Activated T-helper 2 cell treated with anti-CD3 and anti-CD28 coated beads, Interferon-gamma antibody, Interleukin-2, Interleukin-4, amounts not matched to agents 10 μg/mL and 5 μg/mL and 100 μg/mL, durations not matched to agents 14 hours and 24 hours and 36 hours (primary cell): ENCODE measurements at regions of chr4 and their contacts with region 1.

Region 1: GRCh38 chr4:10006231-10006600 is 15.1 kb downstream of the SLC2A9 start:
- DNase-seq: no peak
- H3K4me3 Mint-ChIP-seq: no peak overlapping the region
- H3K27ac Mint-ChIP-seq: no peak overlapping the region
- H3K4me1 Mint-ChIP-seq: peaks cover 40% of the 10 kb centered on the region
- H3K27me3 Mint-ChIP-seq: no peaks in the 10 kb centered on the region

Region 2: GRCh38 chr4:9825049-9825448 is 181.2 kb before region 1 on chr4:
- intact Hi-C with region 1: no loop called
- DNase-seq: peak; percentile 11
- H3K4me3 Mint-ChIP-seq: no peak overlapping the region
- H3K27ac Mint-ChIP-seq: no peak overlapping the region
- H3K4me1 Mint-ChIP-seq: peaks cover 17% of the 10 kb centered on the region
- H3K27me3 Mint-ChIP-seq: peaks cover 48% of the 10 kb centered on the region

Region 3: GRCh38 chr4:9904976-9905587 is 101.1 kb before region 1 on chr4:
- intact Hi-C with region 1: loop called (anchors 10 kb)
- DNase-seq: no peak
- H3K4me3 Mint-ChIP-seq: no peak overlapping the region
- H3K27ac Mint-ChIP-seq: no peak overlapping the region
- H3K4me1 Mint-ChIP-seq: peaks cover 11% of the 10 kb centered on the region
- H3K27me3 Mint-ChIP-seq: peaks cover 2% of the 10 kb centered on the region

Region 4: DNA sequence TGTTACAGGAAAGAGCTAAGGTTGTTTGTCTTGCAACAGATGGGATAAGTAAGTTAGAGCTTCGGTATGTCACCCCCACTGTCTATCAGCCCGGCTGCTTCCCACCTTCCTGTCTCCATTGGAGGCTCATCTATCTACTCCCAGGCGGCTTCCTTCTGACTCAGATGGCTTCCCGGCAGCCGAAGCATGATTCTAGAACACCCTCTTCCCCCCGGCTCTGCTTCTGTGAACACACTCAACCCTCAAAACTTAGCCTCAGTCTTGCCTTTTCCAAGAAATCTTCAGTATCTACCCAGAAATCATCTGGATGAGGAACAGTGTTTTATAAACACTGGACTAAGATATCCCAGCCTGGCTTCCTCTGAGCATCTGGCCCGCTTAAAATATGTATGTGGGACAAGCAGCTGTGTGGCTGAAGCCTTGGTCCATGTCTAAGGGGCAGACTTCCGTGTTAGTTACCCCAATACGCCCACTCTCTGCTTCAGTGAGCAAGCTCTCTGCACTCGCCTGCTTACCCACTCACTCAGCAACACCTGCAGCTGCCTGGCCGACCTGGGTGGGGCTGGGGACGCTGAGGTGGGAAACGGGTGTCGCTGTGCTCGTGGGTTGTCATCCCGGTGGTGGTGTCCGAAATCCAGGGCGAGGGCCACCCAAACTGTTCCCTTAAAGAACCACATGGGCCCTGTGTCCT is 27.1 kb after region 1 on chr4:
- intact Hi-C with region 1: no loop called
- DNase-seq: no peak
- H3K4me3 Mint-ChIP-seq: no peak overlapping the region
- H3K27ac Mint-ChIP-seq: no peak overlapping the region
- H3K4me1 Mint-ChIP-seq: peaks cover 10% of the 10 kb centered on the region
- H3K27me3 Mint-ChIP-seq: peaks cover 6% of the 10 kb centered on the region